PC-3 (cell line): ENCODE measurements at regions of chr17 and their contacts with region 1.

Region 1: GRCh38 chr17:30137158-30137557 is 20.5 kb downstream of the NSRP1 start:
- DNase-seq: no peak
- ATAC-seq: no peak
- H3K4me3 ChIP-seq: no peak overlapping the region
- H3K27ac ChIP-seq: no peak overlapping the region
- H3K4me1 ChIP-seq: no peaks in the 10 kb centered on the region
- H3K27me3 ChIP-seq: no peaks in the 10 kb centered on the region
- CTCF ChIP-seq: no peak

Region 2: DNA sequence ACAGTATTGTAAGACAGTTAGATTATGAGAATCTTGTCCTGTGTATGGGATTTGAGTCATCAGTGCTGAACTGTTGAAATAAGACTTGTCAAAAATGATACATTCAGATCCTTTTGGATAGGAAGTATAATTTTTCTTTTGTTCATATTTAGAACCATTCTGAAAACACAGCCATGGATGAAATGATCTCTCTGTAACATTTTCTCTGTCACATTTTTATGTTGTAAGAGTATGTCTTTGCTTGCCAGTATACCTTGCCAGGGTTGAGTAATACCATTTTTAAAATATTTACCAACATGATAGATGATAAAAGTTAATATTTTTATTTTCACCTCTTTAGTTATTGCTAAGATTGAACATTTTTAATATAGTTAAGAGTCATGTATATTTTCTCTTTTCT is 24.4 kb after region 1 on chr17:
- CTCF ChIA-PET with region 1: no interaction called
- POLR2A ChIA-PET with region 1: interaction called, 21 read pairs
- intact Hi-C with region 1: no loop called
- DNase-seq: no peak
- ATAC-seq: no peak
- H3K4me3 ChIP-seq: no peak overlapping the region
- H3K27ac ChIP-seq: no peak overlapping the region
- H3K4me1 ChIP-seq: no peaks in the 10 kb centered on the region
- H3K27me3 ChIP-seq: no peaks in the 10 kb centered on the region
- CTCF ChIP-seq: no peak